HEK293 (cell line): ENCODE measurements at regions of chr7 and their contacts with region 1.

Region 1: GRCh38 chr7:103074519-103075336 is at the starts of genes ARMC10 and FBXL13:
- H3K4me3 ChIP-seq: peak within 1 kb of the TSS; percentile 84
- H3K27ac ChIP-seq: peak within 1 kb of the TSS; percentile 79
- H3K4me1 ChIP-seq: no peaks in the 10 kb centered on the region
- CTCF ChIP-seq: peak; percentile 82; the same call in 1 of the 2 replicates

Region 2: DNA sequence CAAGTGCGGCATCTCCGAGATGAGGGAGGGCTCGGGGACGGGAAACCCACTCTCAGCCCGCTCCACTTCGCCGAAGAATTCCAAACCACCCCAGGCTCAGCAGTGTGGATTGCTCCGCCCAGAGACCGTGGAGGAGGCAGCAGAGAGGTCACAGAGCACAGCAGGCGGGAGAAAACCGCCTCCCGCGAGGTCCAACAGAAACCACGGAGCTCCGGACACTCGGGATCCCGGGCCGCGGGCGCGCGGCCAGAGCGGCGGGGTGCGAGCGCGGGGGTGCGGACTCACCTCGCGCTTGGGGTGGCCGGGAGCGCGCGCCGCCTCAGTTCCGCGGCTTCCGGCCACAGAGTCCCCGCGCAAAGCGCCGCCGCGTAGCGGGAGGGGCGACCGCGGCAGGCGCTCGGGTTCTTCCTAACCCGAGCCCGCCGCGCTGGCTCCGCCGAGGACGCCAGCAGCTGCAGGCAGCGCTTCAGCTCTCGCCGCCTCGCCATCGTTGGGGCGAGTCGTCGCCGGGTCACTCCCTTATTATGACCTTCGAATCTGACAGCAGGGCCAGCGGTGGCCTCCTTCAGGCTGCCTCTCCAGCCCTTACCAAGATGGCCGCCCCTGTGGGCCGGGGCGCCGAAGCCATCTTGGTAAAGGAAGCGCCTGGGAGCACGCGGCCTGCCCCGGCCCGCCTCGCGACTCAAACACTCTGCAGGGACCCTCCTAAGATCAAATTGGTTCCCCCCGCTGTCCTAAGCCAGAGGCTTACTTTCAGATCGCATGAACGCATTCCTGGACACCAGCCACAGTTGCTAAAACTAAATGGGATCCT is 74.5 kb after region 1 on chr7 and contains the start of gene NAPEPLD:
- CTCF ChIA-PET with region 1: no interaction called
- POLR2A ChIA-PET with region 1: interaction called, 14 read pairs
- H3K4me3 ChIP-seq: peak within 1 kb of the TSS; percentile 72
- H3K27ac ChIP-seq: peak within 1 kb of the TSS; percentile 92
- H3K4me1 ChIP-seq: no peaks in the 10 kb centered on the region; the same call in 1 of the 2 replicates
- CTCF ChIP-seq: no peak